H1 (cell line): ENCODE measurements at regions of chr14 and their contacts with region 1.

Region 1: DNA sequence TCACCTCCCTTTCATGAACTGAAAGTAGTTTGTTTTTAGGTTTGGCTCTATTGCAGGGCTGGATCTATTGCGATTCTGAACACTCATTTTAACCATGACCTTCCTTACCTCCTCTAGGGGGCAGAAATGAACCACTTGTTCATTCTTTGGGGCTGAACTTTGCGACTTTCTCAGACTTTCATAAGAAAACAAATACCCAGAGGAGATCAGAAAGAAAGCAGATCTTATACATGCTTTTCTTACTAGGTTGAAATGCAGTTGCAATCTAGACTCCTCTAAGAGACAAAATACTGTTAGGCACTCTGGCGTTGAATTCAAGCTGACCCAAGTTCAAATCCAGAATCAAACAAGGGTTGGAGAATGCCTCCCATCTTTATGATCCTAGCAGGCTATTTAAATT is 32.6 kb upstream of the PLEKHG3 start:
- DNase-seq: no peak
- H3K4me3 ChIP-seq: no peak overlapping the region
- H3K27ac ChIP-seq: no peak overlapping the region
- H3K4me1 ChIP-seq: peaks cover 0 to 4% (median 0%) of the 10 kb centered on the region in 4 experiments; a peak in 2 of 7 replicates
- H3K27me3 ChIP-seq: no peaks in the 10 kb centered on the region
- CTCF ChIP-seq: peak in 2 of 3 experiments; percentile 73 to 77; a peak in 3 of 4 replicates
- EP300 ChIP-seq: no peak
- POLR2A ChIP-seq: no peak
- RAD21 ChIP-seq: peak; percentile 85 to 91

Region 2: GRCh38 chr14:64681796-64682710 is 10.5 kb after region 1 on chr14:
- CTCF ChIA-PET with region 1: interaction called, 23 read pairs
- POLR2A ChIA-PET with region 1: interaction called, 3 read pairs
- DNase-seq: peak in 1 of 2 experiments; percentile 57
- H3K4me3 ChIP-seq: no peak overlapping the region
- H3K27ac ChIP-seq: no peak overlapping the region; the same call in 1 of the 2 replicates
- H3K4me1 ChIP-seq: peaks cover 0 to 14% (median 6%) of the 10 kb centered on the region in 4 experiments; a peak in 5 of 7 replicates
- H3K27me3 ChIP-seq: no peaks in the 10 kb centered on the region; a peak in 1 of 7 replicates
- CTCF ChIP-seq: peak; percentile 43 to 66 (median 47)
- EP300 ChIP-seq: no peak
- POLR2A ChIP-seq: no peak
- RAD21 ChIP-seq: peak; percentile 18 to 53; a peak in 3 of 4 replicates

Region 3: GRCh38 chr14:64698903-64699302 is 27.3 kb after region 1 on chr14:
- CTCF ChIA-PET with region 1: interaction called, 24 read pairs
- POLR2A ChIA-PET with region 1: no interaction called
- DNase-seq: no peak
- H3K4me3 ChIP-seq: no peak overlapping the region
- H3K27ac ChIP-seq: no peak overlapping the region
- H3K4me1 ChIP-seq: peaks cover 5 to 34% (median 24%) of the 10 kb centered on the region in 4 experiments; a peak in 6 of 7 replicates
- H3K27me3 ChIP-seq: no peaks in the 10 kb centered on the region
- CTCF ChIP-seq: no peak
- EP300 ChIP-seq: no peak
- POLR2A ChIP-seq: no peak
- RAD21 ChIP-seq: no peak

Region 4: GRCh38 chr14:64726585-64726890 is 54.9 kb after region 1 on chr14:
- CTCF ChIA-PET with region 1: interaction called, 33 read pairs
- POLR2A ChIA-PET with region 1: no interaction called
- DNase-seq: no peak
- H3K4me3 ChIP-seq: peak overlapping the region in 1 of 4 experiments; percentile 7; a peak in 1 of 8 replicates
- H3K27ac ChIP-seq: no peak overlapping the region
- H3K4me1 ChIP-seq: peaks cover 24 to 44% (median 38%) of the 10 kb centered on the region in 4 experiments
- H3K27me3 ChIP-seq: no peaks in the 10 kb centered on the region
- CTCF ChIP-seq: no peak
- EP300 ChIP-seq: no peak
- POLR2A ChIP-seq: no peak
- RAD21 ChIP-seq: no peak

Region 5: GRCh38 chr14:64745511-64746091 is 74.0 kb after region 1 on chr14:
- CTCF ChIA-PET with region 1: interaction called, 17 read pairs
- POLR2A ChIA-PET with region 1: no interaction called
- DNase-seq: no peak
- H3K4me3 ChIP-seq: no peak overlapping the region
- H3K27ac ChIP-seq: no peak overlapping the region
- H3K4me1 ChIP-seq: no peaks in the 10 kb centered on the region
- H3K27me3 ChIP-seq: no peaks in the 10 kb centered on the region
- CTCF ChIP-seq: peak in 1 of 3 experiments; percentile 25; a peak in 1 of 4 replicates
- EP300 ChIP-seq: no peak
- POLR2A ChIP-seq: no peak
- RAD21 ChIP-seq: peak; percentile 32 to 49; a peak in 2 of 4 replicates